Panc1 (cell line): ENCODE measurements at regions of chr19 and their contacts with region 1.

Region 1: DNA sequence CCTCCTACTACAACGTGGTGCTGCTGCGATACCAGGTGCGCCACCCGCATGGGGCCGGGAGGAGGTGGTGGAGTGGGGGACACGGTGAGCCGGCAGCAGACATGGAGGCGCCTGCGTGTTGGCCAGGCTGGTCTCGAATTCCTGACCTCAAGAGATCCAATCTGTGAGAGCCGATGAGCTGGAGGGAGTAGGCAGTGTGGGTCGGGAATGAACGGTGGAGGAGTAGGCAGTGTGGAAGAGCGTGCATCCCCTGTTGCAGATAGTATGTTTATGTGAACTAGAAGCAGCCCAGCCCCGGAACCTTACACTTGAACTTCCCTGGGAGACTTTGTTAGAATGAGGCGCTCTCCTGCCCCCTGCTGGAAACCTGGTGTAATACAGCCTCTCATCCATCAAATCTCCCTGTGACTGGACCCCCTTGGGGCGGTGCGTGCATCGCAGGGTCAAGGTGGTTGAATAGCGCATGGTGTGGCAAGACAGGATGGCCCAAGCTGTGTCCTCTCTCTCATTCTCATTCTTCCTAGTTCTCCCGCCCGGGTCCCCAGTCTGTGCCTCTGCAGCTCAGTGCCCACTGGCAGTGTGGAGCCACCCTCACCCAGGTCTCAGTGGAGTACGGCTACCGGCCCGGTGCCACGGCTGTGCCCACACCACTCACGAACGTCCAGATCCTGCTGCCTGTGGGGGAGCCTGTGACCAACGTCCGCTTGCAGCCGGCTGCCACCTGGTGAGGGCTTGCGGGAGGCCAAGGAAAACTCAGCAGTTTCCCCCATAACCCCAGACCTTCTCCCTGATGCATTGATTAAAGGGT is 10.5 kb upstream of the B3GNT3 start:
- DNase-seq: no peak
- ATAC-seq: peak; percentile 64
- H3K4me3 ChIP-seq: no peak overlapping the region
- H3K27ac ChIP-seq: no peak overlapping the region
- H3K4me1 ChIP-seq: 0 out of 2 replicates have a peak, but pooled peaks cover 3% of the 10 kb centered on the region
- H3K27me3 ChIP-seq: no peaks in the 10 kb centered on the region
- CTCF ChIP-seq: peak; percentile 87

Region 2: DNA sequence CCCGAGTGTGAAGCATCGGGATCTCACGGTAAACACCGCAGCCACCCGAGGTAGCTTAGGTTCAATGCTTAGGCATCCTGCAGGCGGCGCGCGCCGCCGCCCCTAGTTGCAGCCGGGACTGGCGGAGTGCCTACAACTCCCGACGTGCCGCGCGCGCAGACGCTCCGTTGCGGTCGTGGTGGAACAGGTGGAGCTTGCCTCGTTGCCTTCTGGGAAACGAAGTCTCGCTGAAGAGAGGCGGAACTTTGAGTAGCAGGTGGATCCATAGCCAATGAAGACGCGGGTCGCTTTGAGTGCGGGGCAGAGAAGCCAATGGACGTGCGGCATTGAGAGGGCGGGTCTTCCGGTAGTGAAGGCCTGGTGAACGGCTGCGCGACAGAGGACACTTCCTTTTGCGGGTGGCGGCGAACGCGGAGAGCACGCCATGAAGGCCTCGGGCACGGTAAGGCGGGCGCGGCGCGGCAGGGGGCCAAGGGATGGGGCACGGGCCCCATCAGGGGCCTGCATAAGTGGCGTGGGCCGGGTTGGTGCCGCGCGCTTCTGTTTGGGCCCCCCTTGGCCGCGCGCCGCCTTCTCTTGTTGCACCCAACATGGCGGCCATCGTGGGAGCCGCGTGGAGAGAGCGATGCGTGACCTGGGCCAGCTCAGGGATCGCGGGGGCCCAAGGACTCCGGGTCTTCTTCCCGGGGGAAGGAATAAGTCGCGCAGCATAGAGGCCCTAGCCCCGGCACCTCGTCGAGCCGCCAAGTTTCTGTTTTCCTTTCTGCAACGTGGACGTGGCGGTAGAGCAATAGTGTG is 75.3 kb after region 1 on chr19 and contains the start of gene RPL18A:
- CTCF ChIA-PET with region 1: no interaction called
- POLR2A ChIA-PET with region 1: no interaction called
- in situ Hi-C with region 1: no loop called
- intact Hi-C with region 1: loop called (anchors 10 kb)
- DNase-seq: peak; percentile 97
- ATAC-seq: peak; percentile 93
- H3K4me3 ChIP-seq: peak within 1 kb of the TSS; percentile 96 to 99
- H3K27ac ChIP-seq: peak within 1 kb of the TSS; percentile 98
- H3K4me1 ChIP-seq: peaks cover 25% of the 10 kb centered on the region
- H3K27me3 ChIP-seq: no peaks in the 10 kb centered on the region
- CTCF ChIP-seq: peak; percentile 94
- total RNA-seq, gene RPL18A: 1,352 TPM

Region 3: DNA sequence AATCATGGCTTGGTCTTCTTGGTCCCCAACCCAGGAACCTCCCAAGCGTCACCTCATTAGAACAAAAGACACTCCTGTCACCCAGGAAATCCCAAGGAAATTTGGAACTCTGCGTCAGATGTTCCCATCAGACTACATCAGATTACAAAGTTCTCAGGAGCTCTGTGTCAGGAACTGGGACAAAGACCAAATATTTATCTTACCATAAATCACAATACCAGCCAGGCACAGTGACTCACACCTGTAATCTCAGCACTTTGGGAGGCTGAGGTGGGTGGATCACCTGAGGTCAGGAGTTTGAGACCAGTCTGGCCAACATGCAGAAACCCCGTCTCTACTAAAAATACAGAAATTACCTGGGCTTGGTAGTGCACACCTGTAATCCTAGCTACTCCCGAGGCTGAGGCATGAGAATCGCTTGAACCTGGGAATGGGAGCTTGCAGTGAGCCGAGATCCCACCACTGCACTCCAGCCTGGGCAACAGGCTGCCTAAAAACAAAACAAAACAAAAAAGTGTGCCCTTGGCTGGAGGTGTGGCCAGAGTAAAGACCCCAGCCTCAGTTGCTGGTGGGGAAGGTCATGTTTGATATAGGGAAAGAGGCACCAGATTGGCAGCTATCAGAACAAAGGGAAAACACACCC is 131.7 kb after region 1 on chr19:
- CTCF ChIA-PET with region 1: no interaction called
- POLR2A ChIA-PET with region 1: no interaction called
- in situ Hi-C with region 1: no loop called
- intact Hi-C with region 1: no loop called
- DNase-seq: no peak
- ATAC-seq: 0 out of 2 replicates have a peak, but pooled peaks have one; percentile 12
- H3K4me3 ChIP-seq: no peak overlapping the region
- H3K27ac ChIP-seq: no peak overlapping the region
- H3K4me1 ChIP-seq: no peaks in the 10 kb centered on the region
- H3K27me3 ChIP-seq: no peaks in the 10 kb centered on the region
- CTCF ChIP-seq: no peak